Heart left ventricle (tissue), 16 donors: ENCODE measurements at regions of chr9 and their contacts with region 1.

Region 1: DNA sequence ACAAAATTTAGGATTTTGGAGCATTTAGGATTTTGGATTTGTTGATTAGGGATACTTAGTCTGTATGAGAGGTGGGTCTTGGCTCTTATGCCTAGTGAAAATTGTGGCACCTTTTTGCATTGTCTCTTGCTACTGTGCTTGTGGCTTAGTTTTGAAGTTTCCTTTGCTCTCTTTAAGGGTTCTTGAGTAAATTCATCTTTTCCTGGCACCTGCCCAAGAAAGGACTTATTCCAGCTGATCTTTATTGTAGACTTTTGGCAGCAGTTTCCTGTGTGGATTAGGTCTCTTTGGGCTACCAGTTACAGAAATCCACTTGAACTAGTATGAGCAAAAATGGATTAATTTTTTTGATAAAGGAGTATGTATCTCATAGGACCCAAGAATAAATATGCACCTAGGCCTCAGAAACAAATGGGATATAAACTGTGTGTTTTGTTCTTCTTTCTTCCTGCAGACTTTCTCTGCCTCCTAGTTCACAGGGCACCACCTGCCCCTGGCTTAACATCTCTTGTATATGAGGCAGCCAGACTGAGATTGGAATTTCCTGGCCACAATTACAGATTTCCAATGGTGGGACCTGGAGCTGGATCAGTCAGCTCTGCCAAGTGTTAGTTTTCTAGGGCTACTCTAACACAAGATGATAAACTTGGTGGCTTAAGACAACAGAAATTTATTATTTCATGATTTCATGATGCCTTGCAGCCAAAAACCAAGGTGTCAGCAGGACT is 44.6 kb downstream of the FOCAD start:
- DNase-seq: peak in 1 of 5 donors; percentile 18
- ATAC-seq: peak in 1 of 4 donors; percentile 11
- H3K4me3 ChIP-seq: no peak overlapping the region
- H3K27ac ChIP-seq: no peak overlapping the region
- H3K4me1 ChIP-seq: peaks cover 0 to 31% (median 10%) of the 10 kb centered on the region in 12 donors
- H3K27me3 ChIP-seq: no peaks in the 10 kb centered on the region
- CTCF ChIP-seq: no peak
- POLR2A ChIP-seq: no peak

Region 2: GRCh38 chr9:20788526-20789451 is 60.1 kb after region 1 on chr9:
- intact Hi-C with region 1: loop called in 1 of 10 experiments (anchors 10 kb)
- DNase-seq: no peak
- ATAC-seq: peak in 3 of 4 donors; percentile 34 to 59 (median 46)
- H3K4me3 ChIP-seq: no peak overlapping the region
- H3K27ac ChIP-seq: no peak overlapping the region
- H3K4me1 ChIP-seq: peaks cover 0 to 12% (median 0%) of the 10 kb centered on the region in 12 donors
- H3K27me3 ChIP-seq: no peaks in the 10 kb centered on the region
- CTCF ChIP-seq: no peak
- POLR2A ChIP-seq: no peak